Esophagus muscularis mucosa (tissue), 4 donors: ENCODE measurements at regions of chr1 and their contacts with region 1.

Region 1: DNA sequence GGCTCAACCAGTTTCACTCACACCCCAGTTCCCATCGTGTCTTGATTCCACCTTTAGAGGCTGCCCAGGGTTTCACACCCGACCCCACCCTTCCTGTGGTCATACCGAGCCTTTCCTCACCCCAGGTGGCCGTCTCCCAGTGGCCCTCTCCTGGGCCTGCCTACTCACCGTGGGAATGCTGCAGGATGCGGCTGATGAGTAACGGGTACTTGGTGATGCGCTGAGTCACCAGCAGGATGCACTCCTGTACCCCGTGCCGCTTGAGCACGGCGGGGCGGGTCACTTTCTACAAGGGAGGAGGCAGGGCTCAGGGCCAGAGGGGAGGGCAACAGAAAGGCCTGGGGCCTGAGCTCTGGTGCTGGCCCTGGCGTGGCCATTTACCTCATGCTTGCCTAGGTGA is 16.4 kb downstream of the ARHGEF2 start:
- DNase-seq: no peak
- H3K4me3 ChIP-seq: no peak overlapping the region
- H3K27ac ChIP-seq: peak overlapping the region; percentile 69 to 84 (median 78)
- H3K4me1 ChIP-seq: peaks cover 45 to 61% (median 50%) of the 10 kb centered on the region in 4 donors
- H3K27me3 ChIP-seq: no peaks in the 10 kb centered on the region
- CTCF ChIP-seq: peak; percentile 48 to 66 (median 61)
- EP300 ChIP-seq: no peak
- POLR2A ChIP-seq: no peak

Region 2: DNA sequence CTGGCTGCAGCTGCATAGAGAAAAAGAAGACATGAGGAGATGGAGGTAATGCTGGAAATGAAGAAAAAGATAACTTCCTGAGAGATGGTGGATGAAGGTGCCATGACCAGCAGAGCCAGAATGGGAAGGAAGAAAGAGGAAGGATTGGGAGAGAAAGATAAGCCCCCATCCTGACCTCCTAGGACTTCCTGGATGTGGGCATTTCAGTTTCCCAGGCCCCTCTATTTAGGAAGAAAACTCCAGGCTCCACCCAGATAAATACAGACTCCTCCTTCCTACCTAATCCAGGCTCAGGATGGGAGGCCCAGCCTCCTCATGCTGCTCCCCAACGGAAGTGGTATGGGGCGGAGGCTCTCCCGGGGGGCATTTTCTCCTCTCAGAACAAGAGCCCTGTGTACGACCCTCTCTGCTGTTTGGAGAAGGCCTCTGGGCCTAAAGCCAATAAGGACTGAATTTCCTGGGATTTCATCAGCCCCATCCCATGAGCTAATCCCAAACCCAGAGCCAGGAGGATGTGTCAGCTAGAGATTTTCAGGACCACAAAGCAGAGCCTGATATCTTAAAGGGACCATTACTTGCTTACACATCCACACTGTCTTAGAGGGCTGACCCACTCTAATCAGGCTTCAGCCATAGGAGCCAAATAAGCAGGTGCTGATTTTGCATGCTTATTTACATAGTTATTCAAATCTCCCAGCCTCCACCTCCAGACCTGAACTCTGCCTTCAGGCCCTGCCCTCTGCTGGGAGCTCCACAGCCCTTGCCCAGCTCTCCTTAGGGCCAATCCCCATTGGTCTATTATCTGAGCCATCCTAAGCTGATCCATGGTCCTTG is 21.5 kb after region 1 on chr1:
- intact Hi-C with region 1: loop called (anchors 2 kb)
- DNase-seq: no peak
- H3K4me3 ChIP-seq: peak overlapping the region; percentile 26 to 46 (median 32)
- H3K27ac ChIP-seq: peak overlapping the region; percentile 97
- H3K4me1 ChIP-seq: peaks cover 51 to 66% (median 59%) of the 10 kb centered on the region in 4 donors
- H3K27me3 ChIP-seq: no peaks in the 10 kb centered on the region
- CTCF ChIP-seq: no peak
- EP300 ChIP-seq: no peak
- POLR2A ChIP-seq: no peak

Region 3: DNA sequence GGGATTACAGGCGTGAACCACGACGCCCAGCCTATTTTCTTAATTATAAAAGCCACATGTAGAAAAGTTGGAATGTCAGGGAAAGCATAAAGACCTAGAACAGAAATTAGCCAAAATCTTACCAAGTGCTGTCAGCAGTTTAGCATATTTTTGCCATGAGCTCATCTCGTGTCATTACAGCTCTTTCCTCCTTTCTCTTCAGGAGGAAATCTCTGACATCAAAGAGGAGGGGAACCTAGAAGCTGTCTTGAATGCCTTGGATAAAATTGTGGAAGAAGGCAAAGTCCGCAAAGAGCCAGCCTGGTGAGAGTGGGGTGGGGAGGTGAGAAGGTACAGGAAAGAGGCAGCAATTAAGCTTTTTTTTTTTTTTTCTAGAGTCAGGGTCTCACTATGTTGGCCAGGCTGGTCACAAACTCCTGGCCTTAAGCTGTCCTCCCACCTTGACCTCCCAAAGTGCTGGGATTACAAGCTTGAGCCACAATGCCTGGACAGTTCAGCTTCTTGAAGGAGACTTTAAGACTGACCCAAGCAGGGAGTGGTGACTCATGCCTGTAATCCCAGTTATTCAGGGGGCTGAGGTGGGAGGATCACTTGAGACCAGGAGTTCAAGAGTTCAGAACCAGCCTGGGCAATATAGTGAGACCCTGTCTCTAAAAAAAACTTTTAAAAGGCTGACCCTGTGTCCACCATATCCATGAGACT is 271.6 kb after region 1 on chr1:
- intact Hi-C with region 1: no loop called
- DNase-seq: no peak
- H3K4me3 ChIP-seq: no peak overlapping the region
- H3K27ac ChIP-seq: no peak overlapping the region
- H3K4me1 ChIP-seq: peaks cover 0 to 18% (median 14%) of the 10 kb centered on the region in 4 donors
- H3K27me3 ChIP-seq: no peaks in the 10 kb centered on the region
- CTCF ChIP-seq: no peak
- EP300 ChIP-seq: no peak
- POLR2A ChIP-seq: no peak